ENCODE measurements at regions of chr1 and their contacts with region 1.

Region 1: GRCh38 chr1:111030590-111030989 is 66.9 kb upstream of the LRIF1 start:
- DNase-seq: peak; percentile 76
- ATAC-seq: peak; percentile 70
- H3K4me3 Mint-ChIP-seq: no peak overlapping the region
- H3K27ac Mint-ChIP-seq: no peak overlapping the region
- H3K4me1 Mint-ChIP-seq: no peaks in the 10 kb centered on the region
- H3K27me3 Mint-ChIP-seq: peaks cover 24% of the 10 kb centered on the region

Region 2: DNA sequence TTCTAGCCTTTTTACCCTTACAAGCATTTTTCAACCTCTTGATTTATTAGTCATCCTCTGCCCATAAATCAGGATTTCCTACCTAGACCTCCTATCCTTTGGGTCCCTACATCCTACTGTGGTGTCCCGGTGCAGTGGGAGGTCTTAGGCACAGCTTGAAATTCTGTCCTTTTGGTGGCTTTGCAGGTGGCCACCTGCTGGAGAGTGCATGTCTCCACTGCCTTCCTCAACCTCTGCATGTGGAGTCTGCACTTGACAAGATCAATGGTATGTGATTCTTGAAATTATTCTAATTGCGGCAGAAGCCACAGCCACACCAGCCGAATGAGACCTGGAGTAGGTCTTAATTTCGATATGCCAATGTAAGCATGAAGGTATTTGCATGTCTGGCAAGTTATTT is 344.4 kb before region 1 on chr1:
- CTCF ChIA-PET with region 1: no interaction called
- POLR2A ChIA-PET with region 1: no interaction called
- DNase-seq: peak; percentile 33
- ATAC-seq: peak; percentile 69
- H3K4me3 Mint-ChIP-seq: no peak overlapping the region
- H3K27ac Mint-ChIP-seq: no peak overlapping the region
- H3K4me1 Mint-ChIP-seq: peaks cover 6% of the 10 kb centered on the region
- H3K27me3 Mint-ChIP-seq: peaks cover 4% of the 10 kb centered on the region

Region 3: GRCh38 chr1:111015225-111015624 is 15.4 kb before region 1 on chr1:
- CTCF ChIA-PET with region 1: interaction called, 19 read pairs
- POLR2A ChIA-PET with region 1: no interaction called
- DNase-seq: no peak
- ATAC-seq: no peak
- H3K4me3 Mint-ChIP-seq: no peak overlapping the region
- H3K27ac Mint-ChIP-seq: no peak overlapping the region
- H3K4me1 Mint-ChIP-seq: no peaks in the 10 kb centered on the region
- H3K27me3 Mint-ChIP-seq: peaks cover 33% of the 10 kb centered on the region

Region 4: DNA sequence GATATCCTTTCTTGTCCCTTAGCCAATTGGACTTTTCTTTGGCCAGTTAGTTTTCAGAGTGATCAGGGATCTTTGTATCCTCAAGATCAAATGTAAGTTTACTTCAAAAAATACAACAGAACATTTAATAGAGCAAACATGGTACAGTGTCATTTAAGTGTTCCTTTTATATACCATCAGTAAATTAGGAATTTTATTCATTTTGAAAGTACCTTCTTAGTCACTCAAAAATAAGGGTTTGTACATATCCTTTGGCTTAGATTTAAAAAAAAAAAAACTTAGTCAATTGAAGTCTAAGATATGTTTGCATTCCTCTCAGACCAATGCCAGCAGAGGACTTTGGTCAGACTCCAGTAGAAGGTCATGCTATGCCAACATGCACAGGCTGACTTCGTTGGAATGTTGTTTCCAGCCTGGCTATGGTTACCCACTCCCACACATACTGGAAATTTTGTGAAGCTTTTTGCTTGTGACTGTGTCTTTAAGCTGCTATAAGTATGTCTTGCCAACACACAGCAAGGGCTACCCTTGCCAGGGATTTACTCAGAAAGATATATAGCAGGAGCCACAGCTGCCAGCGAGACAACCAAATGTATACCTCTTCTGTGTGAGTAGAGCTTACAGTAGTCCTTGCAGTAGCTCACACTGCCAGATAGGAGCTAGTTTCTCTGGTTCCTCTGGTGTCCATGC is 14.6 kb after region 1 on chr1:
- CTCF ChIA-PET with region 1: interaction called, 22 read pairs
- POLR2A ChIA-PET with region 1: no interaction called
- DNase-seq: no peak
- ATAC-seq: no peak
- H3K4me3 Mint-ChIP-seq: no peak overlapping the region
- H3K27ac Mint-ChIP-seq: no peak overlapping the region
- H3K4me1 Mint-ChIP-seq: no peaks in the 10 kb centered on the region
- H3K27me3 Mint-ChIP-seq: peaks cover 30% of the 10 kb centered on the region

Region 5: GRCh38 chr1:111334169-111334568 is 303.6 kb after region 1 on chr1:
- CTCF ChIA-PET with region 1: interaction called, 18 read pairs
- POLR2A ChIA-PET with region 1: no interaction called
- DNase-seq: peak; percentile 66
- ATAC-seq: peak; percentile 76
- H3K4me3 Mint-ChIP-seq: no peak overlapping the region
- H3K27ac Mint-ChIP-seq: no peak overlapping the region
- H3K4me1 Mint-ChIP-seq: peaks cover 2% of the 10 kb centered on the region
- H3K27me3 Mint-ChIP-seq: peaks cover 2% of the 10 kb centered on the region